B cell (primary cell): ENCODE measurements at regions of chr1 and their contacts with region 1.

Region 1: DNA sequence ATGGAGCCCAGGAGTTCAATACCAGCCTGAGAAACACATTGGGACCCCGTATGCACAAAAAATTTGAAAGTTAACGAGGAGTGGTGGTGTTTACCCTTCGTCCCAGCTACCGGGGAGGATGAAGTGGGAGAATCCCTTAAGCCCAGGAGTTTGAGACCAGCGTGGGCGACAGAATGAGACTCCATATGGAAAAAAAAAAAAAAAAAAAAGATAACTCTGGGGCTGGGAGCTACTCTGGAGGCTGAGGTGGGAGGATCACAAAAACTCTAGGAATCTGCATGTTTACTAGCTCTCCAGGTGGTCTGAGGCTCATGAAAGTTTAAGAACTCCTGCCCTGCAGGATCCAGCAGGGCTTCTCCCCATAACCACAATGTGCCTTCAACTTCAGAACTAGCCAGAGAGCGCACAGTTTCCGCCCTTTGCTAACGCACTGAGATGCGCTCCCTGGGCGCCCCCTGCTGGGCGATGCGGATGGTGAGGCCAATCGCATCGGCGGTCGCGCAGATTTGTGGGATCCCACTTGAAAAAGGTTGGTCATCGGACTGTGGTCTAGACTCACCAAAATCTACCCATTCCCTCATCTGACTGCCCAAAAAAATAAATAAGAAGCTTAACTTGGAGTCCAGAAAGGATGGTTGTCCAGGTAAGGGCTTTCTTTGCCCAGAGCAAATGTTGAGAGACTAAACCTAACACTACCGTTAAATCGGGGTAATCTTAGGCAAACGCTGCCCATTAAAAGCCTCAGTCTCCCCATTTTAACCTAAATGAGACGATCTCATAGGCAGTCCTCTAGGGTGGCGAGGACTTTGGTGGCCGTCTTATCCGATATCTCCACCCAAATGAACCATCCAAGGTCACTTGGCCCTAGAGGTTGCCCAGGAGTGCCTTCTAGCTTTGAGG is 8.8 kb downstream of the ZNF683 start:
- DNase-seq: peak; percentile 87
- ATAC-seq: peak; percentile 82
- H3K4me3 ChIP-seq: no peak overlapping the region
- H3K4me3 Mint-ChIP-seq: no peak overlapping the region
- H3K27ac ChIP-seq: no peak overlapping the region
- H3K27ac Mint-ChIP-seq: no peak overlapping the region
- H3K4me1 ChIP-seq: peaks cover 22 to 28% of the 10 kb centered on the region in 2 donors
- H3K4me1 Mint-ChIP-seq: peaks cover 31% of the 10 kb centered on the region
- H3K27me3 ChIP-seq: peaks cover 0 to 36% (median 14%) of the 10 kb centered on the region in 4 experiments
- H3K27me3 Mint-ChIP-seq: peaks cover 28% of the 10 kb centered on the region
- CTCF ChIP-seq: peak; percentile 95

Region 2: DNA sequence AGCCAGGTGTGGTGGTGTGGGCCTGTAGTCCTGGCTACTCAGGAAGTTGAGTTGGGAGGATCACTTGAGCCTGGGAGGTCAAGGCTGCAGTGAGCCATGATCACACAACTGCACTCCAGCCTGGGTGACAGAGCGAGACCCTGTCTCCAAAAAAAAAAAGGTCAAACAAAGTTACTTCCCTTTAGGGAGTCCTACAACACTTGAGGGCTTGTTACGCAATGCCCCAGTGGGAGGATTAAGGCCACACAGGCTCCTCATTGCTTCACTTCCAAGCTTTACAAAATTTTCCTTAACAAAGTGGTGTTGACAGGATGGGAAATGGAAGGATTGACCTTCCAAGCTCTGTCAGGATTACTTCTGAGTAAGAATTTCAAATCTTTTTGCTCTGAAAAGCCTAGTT is 348.4 kb before region 1 on chr1:
- CTCF ChIA-PET with region 1: no interaction called
- POLR2A ChIA-PET with region 1: no interaction called
- intact Hi-C with region 1: no loop called
- DNase-seq: no peak
- ATAC-seq: no peak
- H3K4me3 ChIP-seq: no peak overlapping the region
- H3K4me3 Mint-ChIP-seq: no peak overlapping the region
- H3K27ac ChIP-seq: no peak overlapping the region
- H3K27ac Mint-ChIP-seq: no peak overlapping the region
- H3K4me1 ChIP-seq: no peaks in the 10 kb centered on the region
- H3K4me1 Mint-ChIP-seq: no peaks in the 10 kb centered on the region
- H3K27me3 ChIP-seq: peaks cover 0 to 2% (median 0%) of the 10 kb centered on the region in 4 experiments
- H3K27me3 Mint-ChIP-seq: peaks cover 4% of the 10 kb centered on the region
- CTCF ChIP-seq: no peak

Region 3: DNA sequence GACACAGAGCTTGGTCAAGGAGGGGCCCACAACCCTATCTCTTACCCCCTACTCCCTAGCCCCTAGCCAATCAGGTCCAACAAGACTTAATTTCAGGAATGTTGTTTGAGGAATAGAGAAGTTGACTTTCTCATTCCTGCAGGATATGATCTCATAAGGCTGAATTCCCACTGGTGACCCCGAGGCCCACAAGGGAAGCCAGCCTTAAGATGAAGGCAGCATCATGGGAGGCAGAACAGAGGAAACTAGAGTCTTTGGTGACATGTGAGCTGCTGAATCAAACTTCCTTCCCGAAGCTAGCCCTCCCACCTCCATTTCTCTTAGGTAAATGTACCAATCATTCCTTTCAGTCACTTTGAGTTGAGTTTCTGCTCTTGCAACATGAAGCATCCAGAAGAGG is 261.3 kb before region 1 on chr1:
- CTCF ChIA-PET with region 1: interaction called, 9 read pairs
- POLR2A ChIA-PET with region 1: no interaction called
- intact Hi-C with region 1: loop called (anchors 1 kb)
- DNase-seq: no peak
- ATAC-seq: no peak
- H3K4me3 ChIP-seq: no peak overlapping the region
- H3K4me3 Mint-ChIP-seq: no peak overlapping the region
- H3K27ac ChIP-seq: no peak overlapping the region
- H3K27ac Mint-ChIP-seq: no peak overlapping the region
- H3K4me1 ChIP-seq: no peaks in the 10 kb centered on the region
- H3K4me1 Mint-ChIP-seq: peaks cover 4% of the 10 kb centered on the region
- H3K27me3 ChIP-seq: no peaks in the 10 kb centered on the region
- H3K27me3 Mint-ChIP-seq: peaks cover 17% of the 10 kb centered on the region
- CTCF ChIP-seq: no peak

Region 4: DNA sequence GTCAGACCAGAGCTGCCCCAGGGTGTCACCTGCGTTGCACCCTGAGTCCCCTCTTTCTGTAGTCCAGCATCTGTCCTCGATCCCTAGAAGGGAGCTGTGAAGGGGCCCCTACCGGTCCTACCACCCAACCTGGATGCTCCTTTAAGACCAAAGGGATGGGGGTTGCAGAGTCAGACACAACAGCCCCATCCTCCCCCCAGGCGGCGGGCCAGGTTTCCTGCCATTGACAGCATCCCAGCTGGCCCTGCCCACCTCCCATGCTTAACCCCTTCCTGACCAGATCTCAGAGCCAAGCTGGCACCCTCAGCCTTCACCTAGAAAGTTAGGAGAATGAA is 207.1 kb before region 1 on chr1:
- CTCF ChIA-PET with region 1: no interaction called
- POLR2A ChIA-PET with region 1: no interaction called
- intact Hi-C with region 1: no loop called
- DNase-seq: no peak
- ATAC-seq: no peak
- H3K4me3 ChIP-seq: no peak overlapping the region
- H3K4me3 Mint-ChIP-seq: no peak overlapping the region
- H3K27ac ChIP-seq: no peak overlapping the region
- H3K27ac Mint-ChIP-seq: no peak overlapping the region
- H3K4me1 ChIP-seq: peaks cover 14 to 15% of the 10 kb centered on the region in 2 donors
- H3K4me1 Mint-ChIP-seq: peaks cover 2% of the 10 kb centered on the region
- H3K27me3 ChIP-seq: peaks cover 0 to 55% (median 17%) of the 10 kb centered on the region in 4 experiments
- H3K27me3 Mint-ChIP-seq: peaks cover 44% of the 10 kb centered on the region
- CTCF ChIP-seq: no peak

Region 5: GRCh38 chr1:26169669-26170471 is 193.9 kb before region 1 on chr1 and contains the start of gene ZNF593:
- CTCF ChIA-PET with region 1: interaction called, 42 read pairs
- POLR2A ChIA-PET with region 1: no interaction called
- intact Hi-C with region 1: loop called (anchors 1 kb)
- DNase-seq: peak; percentile 92
- ATAC-seq: peak; percentile 97
- H3K4me3 ChIP-seq: peak within 1 kb of the TSS; percentile 58 to 94 (median 86)
- H3K4me3 Mint-ChIP-seq: peak within 1 kb of the TSS; percentile 93
- H3K27ac ChIP-seq: peak within 1 kb of the TSS; percentile 38 to 91
- H3K27ac Mint-ChIP-seq: peak within 1 kb of the TSS; percentile 85
- H3K4me1 ChIP-seq: peaks cover 7 to 15% of the 10 kb centered on the region in 2 donors
- H3K4me1 Mint-ChIP-seq: peaks cover 15% of the 10 kb centered on the region
- H3K27me3 ChIP-seq: no peaks in the 10 kb centered on the region
- H3K27me3 Mint-ChIP-seq: no peaks in the 10 kb centered on the region
- CTCF ChIP-seq: peak; percentile 79
- total RNA-seq, gene ZNF593: 10.7 and 13.5 TPM in 2 replicates

Region 6: GRCh38 chr1:26279456-26280332 is 84.1 kb before region 1 on chr1 and contains the start of gene SH3BGRL3:
- CTCF ChIA-PET with region 1: interaction called, 96 read pairs
- POLR2A ChIA-PET with region 1: interaction called, 3 read pairs
- intact Hi-C with region 1: loop called (anchors 1 kb)
- DNase-seq: peak; percentile 87
- ATAC-seq: peak; percentile 68
- H3K4me3 ChIP-seq: peak within 1 kb of the TSS; percentile 75 to 93 (median 90)
- H3K4me3 Mint-ChIP-seq: peak within 1 kb of the TSS; percentile 92
- H3K27ac ChIP-seq: peak within 1 kb of the TSS; percentile 73 to 81
- H3K27ac Mint-ChIP-seq: peak within 1 kb of the TSS; percentile 91
- H3K4me1 ChIP-seq: peaks cover 55 to 83% of the 10 kb centered on the region in 2 donors
- H3K4me1 Mint-ChIP-seq: peaks cover 74% of the 10 kb centered on the region
- H3K27me3 ChIP-seq: no peaks in the 10 kb centered on the region
- H3K27me3 Mint-ChIP-seq: no peaks in the 10 kb centered on the region
- CTCF ChIP-seq: no peak
- total RNA-seq, gene SH3BGRL3: 230 and 232 TPM in 2 replicates

Region 7: DNA sequence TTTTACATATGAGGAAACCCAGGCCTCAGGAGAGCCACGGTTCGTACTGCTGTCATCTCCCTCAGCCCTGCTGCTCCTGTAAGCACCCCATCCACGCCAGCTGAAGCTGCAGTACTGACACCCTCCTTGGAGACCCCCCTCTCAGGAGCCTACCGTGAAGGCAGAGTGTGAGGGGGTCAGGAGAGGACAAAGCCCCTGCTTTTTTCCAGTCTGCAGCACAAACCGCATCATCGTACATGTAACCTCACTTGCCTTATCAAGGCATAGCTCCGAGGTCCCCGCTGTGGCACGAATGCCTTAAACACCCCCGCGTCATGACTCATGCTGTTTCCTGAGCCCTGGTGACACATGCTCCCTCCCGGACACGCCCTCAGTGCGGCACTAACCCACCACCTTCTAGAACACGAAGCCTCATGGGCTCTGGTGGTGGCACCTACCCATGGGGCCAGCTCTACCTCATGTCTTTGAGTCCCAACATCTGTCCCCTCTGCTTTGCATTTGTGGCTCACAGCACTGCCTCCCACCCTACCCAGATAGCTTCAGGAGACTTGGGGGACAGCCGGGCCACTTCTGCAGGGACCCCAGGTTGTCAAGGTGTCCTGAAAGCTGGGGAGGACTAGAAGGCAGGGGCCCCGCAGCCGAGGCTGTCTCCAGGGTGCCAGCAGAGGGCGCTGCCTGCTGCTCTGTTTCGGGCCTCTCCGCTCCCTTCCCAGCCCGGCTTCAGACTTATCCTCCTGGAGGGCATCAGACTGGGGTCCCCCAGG is 79.0 kb before region 1 on chr1:
- CTCF ChIA-PET with region 1: interaction called, 73 read pairs
- POLR2A ChIA-PET with region 1: interaction called, 3 read pairs
- intact Hi-C with region 1: loop called (anchors 1 kb)
- DNase-seq: peak; percentile 87
- ATAC-seq: peak; percentile 47
- H3K4me3 ChIP-seq: peak overlapping the region in 2 of 5 experiments; percentile 5 to 19
- H3K4me3 Mint-ChIP-seq: peak overlapping the region; percentile 87
- H3K27ac ChIP-seq: peak overlapping the region; percentile 93 to 96
- H3K27ac Mint-ChIP-seq: peak overlapping the region; percentile 97
- H3K4me1 ChIP-seq: peaks cover 79 to 89% of the 10 kb centered on the region in 2 donors
- H3K4me1 Mint-ChIP-seq: peaks cover 88% of the 10 kb centered on the region
- H3K27me3 ChIP-seq: no peaks in the 10 kb centered on the region
- H3K27me3 Mint-ChIP-seq: no peaks in the 10 kb centered on the region
- CTCF ChIP-seq: peak; percentile 77

Region 8: DNA sequence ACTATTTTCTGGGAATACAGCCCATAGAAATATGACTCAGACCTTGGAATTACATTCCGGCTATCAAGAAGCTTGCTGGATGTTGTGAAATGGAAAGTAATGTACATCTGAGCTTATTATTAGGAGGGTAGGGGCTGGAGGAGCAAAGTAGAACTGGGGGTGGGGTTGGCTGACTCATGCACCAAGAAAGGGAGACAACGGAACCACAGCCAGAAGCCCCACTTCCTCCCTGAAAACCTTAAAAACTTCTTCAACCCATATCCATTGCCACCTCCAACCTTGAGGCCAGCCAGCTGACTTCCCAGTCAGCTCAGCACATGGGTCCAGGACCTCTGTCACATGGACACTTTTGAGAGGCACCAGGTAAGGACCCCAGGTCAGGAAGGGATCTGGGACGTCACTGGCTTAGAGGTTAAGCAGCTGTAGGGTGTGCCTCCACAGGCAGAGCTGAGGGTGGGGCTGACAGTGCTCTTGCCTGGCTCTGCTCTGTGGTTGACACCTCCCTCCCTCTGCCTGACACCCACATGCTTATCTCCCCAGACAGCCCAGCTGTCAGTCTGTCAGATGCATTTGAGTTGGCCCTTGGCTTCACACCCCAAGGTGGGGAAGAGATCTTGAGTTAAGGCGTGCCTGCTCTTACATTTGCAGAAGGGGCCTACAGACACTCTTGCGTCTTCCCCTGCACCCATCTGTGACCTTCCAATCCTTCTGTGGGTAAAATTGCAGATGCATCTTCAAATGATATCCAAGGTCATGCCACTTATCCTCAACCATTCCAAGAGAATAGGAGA is 14.5 kb after region 1 on chr1:
- CTCF ChIA-PET with region 1: interaction called, 17 read pairs
- POLR2A ChIA-PET with region 1: no interaction called
- intact Hi-C with region 1: no loop called
- DNase-seq: peak; percentile 62
- ATAC-seq: peak; percentile 93
- H3K4me3 ChIP-seq: peak overlapping the region in 3 of 5 experiments; percentile 17 to 36 (median 17)
- H3K4me3 Mint-ChIP-seq: peak overlapping the region; percentile 77
- H3K27ac ChIP-seq: peak overlapping the region; percentile 52 to 76
- H3K27ac Mint-ChIP-seq: peak overlapping the region; percentile 93
- H3K4me1 ChIP-seq: peaks cover 25 to 40% of the 10 kb centered on the region in 2 donors
- H3K4me1 Mint-ChIP-seq: peaks cover 46% of the 10 kb centered on the region
- H3K27me3 ChIP-seq: no peaks in the 10 kb centered on the region
- H3K27me3 Mint-ChIP-seq: no peaks in the 10 kb centered on the region
- CTCF ChIP-seq: no peak

Region 9: GRCh38 chr1:26391450-26391849 is 27.7 kb after region 1 on chr1:
- CTCF ChIA-PET with region 1: interaction called, 6 read pairs
- POLR2A ChIA-PET with region 1: no interaction called
- intact Hi-C with region 1: loop called (anchors 1 kb)
- DNase-seq: peak; percentile 40
- ATAC-seq: no peak
- H3K4me3 ChIP-seq: no peak overlapping the region
- H3K4me3 Mint-ChIP-seq: no peak overlapping the region
- H3K27ac ChIP-seq: no peak overlapping the region
- H3K27ac Mint-ChIP-seq: no peak overlapping the region
- H3K4me1 ChIP-seq: no peaks in the 10 kb centered on the region
- H3K4me1 Mint-ChIP-seq: peaks cover 2% of the 10 kb centered on the region
- H3K27me3 ChIP-seq: peaks cover 0 to 2% (median 0%) of the 10 kb centered on the region in 4 experiments
- H3K27me3 Mint-ChIP-seq: peaks cover 14% of the 10 kb centered on the region
- CTCF ChIP-seq: peak; percentile 26